ENCODE measurements at regions of chr22 and their contacts with region 1.

Region 1: DNA sequence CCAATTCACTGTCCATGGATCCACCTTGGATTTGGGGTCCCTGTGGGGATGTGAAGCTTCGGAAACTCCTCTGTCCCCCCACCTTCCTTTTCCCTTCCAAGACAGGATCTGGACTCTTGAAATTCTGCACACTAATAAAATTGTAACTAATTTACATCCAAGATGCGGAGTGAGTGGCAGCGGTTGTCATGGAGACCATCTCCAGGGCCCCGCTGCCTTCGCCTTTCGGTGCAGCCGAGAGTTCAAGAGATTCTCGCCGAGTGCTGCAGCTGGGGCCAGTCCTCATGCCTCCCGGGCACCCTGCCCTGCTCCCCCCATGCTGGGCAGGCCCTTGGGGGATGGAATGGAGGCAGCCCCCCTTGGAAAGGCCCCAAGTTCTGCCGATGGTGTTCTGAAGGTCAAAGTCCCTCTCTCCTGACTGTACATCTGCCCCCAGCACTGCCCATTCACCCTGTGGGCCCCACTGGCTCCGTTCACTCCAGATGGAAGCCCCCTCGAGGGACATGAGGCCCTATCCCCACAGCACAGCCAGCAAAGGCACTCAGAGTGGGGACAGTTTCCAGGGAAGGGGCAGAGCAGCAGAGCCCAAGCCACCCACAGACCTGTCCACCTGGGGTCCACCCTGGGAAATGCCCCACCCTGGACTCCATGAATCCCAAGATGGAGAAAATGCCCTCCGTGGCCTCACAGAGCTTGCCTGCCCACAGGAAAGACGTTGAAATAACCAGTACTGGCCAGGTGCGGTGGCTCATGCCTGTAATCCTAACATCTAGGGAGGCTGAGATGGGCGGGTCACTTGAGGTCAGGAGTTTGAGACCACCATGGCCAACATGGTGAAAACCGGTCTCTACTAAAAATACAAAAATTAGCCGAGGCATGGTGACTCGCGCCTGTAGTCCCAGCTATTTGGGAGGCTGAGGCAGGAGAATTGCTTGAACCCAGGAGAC is 25.9 kb downstream of the IGLL1 start:
- DNase-seq: no peak
- H3K4me3 ChIP-seq: no peak overlapping the region
- H3K27ac ChIP-seq: no peak overlapping the region
- H3K4me1 ChIP-seq: no peaks in the 10 kb centered on the region
- H3K27me3 ChIP-seq: no peaks in the 10 kb centered on the region
- CTCF ChIP-seq: no peak
- POLR2A ChIP-seq: no peak

Region 2: GRCh38 chr22:23509571-23510305 is 44.5 kb before region 1 on chr22:
- intact Hi-C with region 1: no loop called
- DNase-seq: peak in 1 of 7 donors; percentile 26
- H3K4me3 ChIP-seq: no peak overlapping the region
- H3K27ac ChIP-seq: no peak overlapping the region
- H3K4me1 ChIP-seq: peaks cover 3 to 4% of the 10 kb centered on the region in 2 donors
- H3K27me3 ChIP-seq: no peaks in the 10 kb centered on the region
- CTCF ChIP-seq: no peak
- POLR2A ChIP-seq: no peak

Region 3: GRCh38 chr22:23521441-23522113 is 32.6 kb before region 1 on chr22:
- intact Hi-C with region 1: no loop called
- DNase-seq: peak; percentile 87 to 97 (median 93)
- H3K4me3 ChIP-seq: peak overlapping the region in 2 of 4 donors; percentile 19 to 53
- H3K27ac ChIP-seq: peak overlapping the region in 4 of 5 donors; percentile 53 to 91 (median 81)
- H3K4me1 ChIP-seq: peaks cover 12 to 19% of the 10 kb centered on the region in 2 donors
- H3K27me3 ChIP-seq: no peaks in the 10 kb centered on the region
- CTCF ChIP-seq: peak in 1 of 6 experiments; percentile 24
- POLR2A ChIP-seq: peak; percentile 43 to 44

Region 4: DNA sequence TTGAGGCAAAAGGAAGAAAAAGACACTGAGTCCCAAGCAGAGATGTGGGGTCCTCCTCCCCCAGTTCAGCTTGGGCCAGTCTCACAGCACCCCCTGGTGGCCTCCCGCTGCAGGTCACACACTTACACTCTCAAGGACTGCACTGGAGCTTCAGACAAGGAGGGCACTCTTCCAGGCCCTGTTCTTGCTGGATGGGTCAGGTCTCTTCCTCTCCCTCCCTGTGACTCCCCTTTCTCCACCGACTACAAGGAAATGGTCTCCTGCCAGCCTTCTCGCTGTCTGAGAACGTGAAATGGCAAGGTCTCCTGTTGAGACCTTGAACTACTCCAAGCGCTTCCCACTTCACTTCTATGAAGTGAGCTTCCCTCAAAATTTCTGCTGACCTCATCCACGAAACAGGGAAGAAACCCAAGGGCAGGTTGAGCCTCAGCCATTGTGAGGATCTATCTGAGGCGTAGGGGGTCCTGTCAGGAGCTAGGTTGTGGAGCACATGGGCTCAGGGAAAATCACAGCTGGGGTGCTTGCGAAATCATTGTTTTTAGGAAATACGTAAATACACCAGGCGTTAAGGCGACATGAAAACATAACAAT is 37.1 kb after region 1 on chr22:
- intact Hi-C with region 1: loop called in 1 of 2 experiments (anchors 5 kb)
- DNase-seq: peak; percentile 58 to 82 (median 72)
- H3K4me3 ChIP-seq: no peak overlapping the region
- H3K27ac ChIP-seq: no peak overlapping the region
- H3K4me1 ChIP-seq: peaks cover 4 to 8% of the 10 kb centered on the region in 2 donors
- H3K27me3 ChIP-seq: no peaks in the 10 kb centered on the region
- CTCF ChIP-seq: peak; percentile 57 to 85 (median 77)
- POLR2A ChIP-seq: no peak

Measured in adrenal gland (tissue), 19 donors.